ENCODE measurements at regions of chr20 and their contacts with region 1.

Region 1: DNA sequence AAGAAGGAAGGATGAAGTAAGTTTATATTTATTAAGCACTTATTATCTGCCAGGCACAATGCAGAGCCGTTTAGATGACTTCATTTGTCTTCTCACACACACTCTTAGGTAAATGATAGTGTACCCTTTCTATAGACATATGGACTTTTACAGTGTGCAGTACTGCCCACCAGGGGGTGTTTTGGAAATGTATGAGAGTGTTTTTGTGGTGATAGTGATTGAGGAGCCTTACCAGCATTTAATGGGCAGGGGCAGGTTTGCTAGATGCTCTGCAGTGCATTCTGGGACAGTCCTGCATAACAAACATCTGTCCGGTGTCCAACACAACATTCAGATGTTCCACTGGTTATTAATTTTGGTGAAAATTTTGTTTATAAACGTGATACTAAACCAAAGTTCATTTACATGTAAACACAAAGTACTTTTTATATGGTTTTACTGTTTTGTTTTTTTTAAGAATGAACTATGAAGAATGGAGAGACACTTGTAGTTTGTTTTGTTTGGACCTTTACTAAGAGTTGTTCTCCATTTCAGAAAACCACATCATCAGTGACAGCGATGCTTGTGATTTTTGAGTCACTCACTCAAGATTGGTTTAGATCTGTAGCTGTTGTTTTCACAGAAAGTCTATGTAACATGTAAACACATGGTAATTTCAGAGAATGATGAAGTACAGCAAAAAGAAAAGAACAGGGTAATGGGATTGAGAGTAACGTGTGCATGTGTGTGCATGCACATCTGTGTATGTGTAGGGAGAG is 19.9 kb downstream of the KCNS1 start:
- DNase-seq: no peak
- H3K4me3 ChIP-seq: no peak overlapping the region
- H3K27ac ChIP-seq: no peak overlapping the region
- H3K4me1 ChIP-seq: no peaks in the 10 kb centered on the region
- H3K27me3 ChIP-seq: no peaks in the 10 kb centered on the region
- CTCF ChIP-seq: peak; percentile 40 to 46

Region 2: DNA sequence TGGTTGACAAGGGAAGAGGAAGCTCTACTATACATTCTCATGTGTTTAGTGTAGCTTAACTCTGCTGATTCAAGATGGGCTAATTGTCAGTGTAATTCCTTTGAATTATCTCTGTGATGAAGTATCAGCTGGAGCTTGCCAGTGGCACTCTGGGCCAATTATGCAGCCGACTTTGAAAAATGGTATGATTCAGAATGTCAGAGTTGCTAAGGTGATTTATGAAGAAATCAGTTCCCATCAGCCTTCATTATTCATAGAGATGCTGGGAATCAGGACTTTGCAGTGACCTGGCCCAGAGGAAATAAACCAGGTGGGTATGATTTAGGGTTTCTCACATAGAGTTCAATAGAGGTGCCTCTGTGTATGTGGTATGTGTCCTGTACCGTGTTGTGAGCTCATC is 13.5 kb before region 1 on chr20:
- CTCF ChIA-PET with region 1: no interaction called
- dilution Hi-C with region 1: no loop called
- in situ Hi-C with region 1: no loop called
- intact Hi-C with region 1: loop called (anchors 2 kb)
- DNase-seq: peak; percentile 60
- H3K4me3 ChIP-seq: no peak overlapping the region
- H3K27ac ChIP-seq: peak overlapping the region; percentile 28
- H3K4me1 ChIP-seq: peaks cover 24% of the 10 kb centered on the region
- H3K27me3 ChIP-seq: no peaks in the 10 kb centered on the region
- CTCF ChIP-seq: no peak

Region 3: DNA sequence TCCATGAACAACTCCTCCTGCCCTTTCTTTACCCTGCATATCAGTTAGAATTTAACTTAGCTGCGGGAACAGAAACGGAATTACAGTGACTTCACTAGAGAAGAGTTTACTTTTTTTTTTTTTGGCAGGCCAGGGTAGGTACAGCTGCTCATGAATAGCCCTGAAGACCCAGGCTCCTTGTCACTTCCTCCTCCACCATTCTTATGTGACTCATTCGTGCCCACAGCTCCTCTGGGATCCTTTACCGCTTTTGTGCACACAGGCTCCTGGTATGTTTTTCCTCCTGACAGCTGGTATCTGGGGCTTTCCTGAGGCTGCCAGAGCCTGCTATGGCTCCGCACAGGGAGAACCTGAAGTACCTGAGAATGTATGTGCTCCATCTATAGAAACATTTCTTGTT is 23.7 kb after region 1 on chr20:
- CTCF ChIA-PET with region 1: no interaction called
- dilution Hi-C with region 1: no loop called
- in situ Hi-C with region 1: no loop called
- intact Hi-C with region 1: no loop called
- DNase-seq: peak; percentile 95
- H3K4me3 ChIP-seq: no peak overlapping the region
- H3K27ac ChIP-seq: peak overlapping the region; percentile 50
- H3K4me1 ChIP-seq: peaks cover 11% of the 10 kb centered on the region
- H3K27me3 ChIP-seq: no peaks in the 10 kb centered on the region
- CTCF ChIP-seq: no peak

Measured in mammary epithelial cell (primary cell).